ENCODE measurements at regions of chr7 and their contacts with region 1.

Region 1: DNA sequence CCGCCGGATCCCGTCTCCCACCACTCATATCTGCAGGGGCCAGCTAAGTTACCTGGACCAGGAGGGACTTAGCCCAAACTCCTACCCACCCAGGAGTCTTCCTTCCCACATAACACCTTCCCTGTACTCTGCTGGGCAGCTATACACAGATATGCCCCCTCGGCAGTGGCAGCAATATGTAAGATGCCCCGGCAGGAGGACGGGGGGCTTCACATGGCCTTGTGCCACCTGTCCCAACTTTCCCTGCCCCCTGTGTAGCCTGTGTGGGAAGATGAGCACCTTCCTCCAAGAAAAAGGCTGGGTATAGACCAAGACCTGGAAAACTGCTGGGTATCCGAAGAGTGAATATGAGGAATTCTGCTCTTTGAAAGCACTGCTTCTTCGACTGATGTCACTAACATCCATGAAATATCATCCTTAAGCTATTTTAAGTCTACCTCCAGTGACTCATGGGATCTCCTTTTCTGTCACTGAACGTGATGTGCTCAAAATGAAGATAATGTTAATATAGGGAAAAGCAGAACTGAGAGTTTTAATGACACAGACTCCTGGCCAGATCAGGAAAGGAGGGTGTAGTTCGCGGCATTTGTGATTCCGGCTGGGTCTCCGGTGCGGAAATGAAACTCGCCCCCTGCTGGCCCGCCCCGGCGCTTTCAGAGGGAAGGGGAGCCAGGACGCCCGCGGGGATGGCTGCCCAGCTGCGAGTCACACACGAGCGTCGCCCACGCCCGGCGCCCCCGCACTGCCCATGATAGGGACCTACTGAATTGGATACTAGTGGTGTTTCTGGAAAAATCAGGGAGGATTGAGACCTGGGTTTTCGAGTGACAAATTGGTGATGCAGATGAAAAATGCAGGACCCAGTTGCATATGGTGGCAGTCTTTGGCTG is 256.9 kb upstream of the NFE2L3 start:
- DNase-seq: peak; percentile 76 to 93
- ATAC-seq: peak; percentile 73
- H3K4me3 ChIP-seq: no peak overlapping the region
- H3K27ac ChIP-seq: no peak overlapping the region
- H3K4me1 ChIP-seq: no peaks in the 10 kb centered on the region
- H3K27me3 ChIP-seq: peaks cover 0 to 3% of the 10 kb centered on the region in 2 donors

Region 2: GRCh38 chr7:25926009-25926408 is 30.9 kb after region 1 on chr7:
- intact Hi-C with region 1: no loop called
- DNase-seq: peak in 1 of 2 donors; percentile 41
- ATAC-seq: peak; percentile 64
- H3K4me3 ChIP-seq: no peak overlapping the region
- H3K27ac ChIP-seq: no peak overlapping the region
- H3K4me1 ChIP-seq: no peaks in the 10 kb centered on the region
- H3K27me3 ChIP-seq: peaks cover 0 to 4% of the 10 kb centered on the region in 2 donors

Region 3: GRCh38 chr7:26061688-26062150 is 166.6 kb after region 1 on chr7:
- intact Hi-C with region 1: loop called (anchors 2 kb)
- DNase-seq: peak; percentile 53 to 83
- ATAC-seq: peak; percentile 76
- H3K4me3 ChIP-seq: no peak overlapping the region
- H3K27ac ChIP-seq: no peak overlapping the region
- H3K4me1 ChIP-seq: no peaks in the 10 kb centered on the region
- H3K27me3 ChIP-seq: peaks cover 0 to 4% of the 10 kb centered on the region in 2 donors

Region 4: GRCh38 chr7:26667500-26668133 is 772.5 kb after region 1 on chr7:
- intact Hi-C with region 1: loop called (anchors 5 to 10 kb)
- DNase-seq: peak in 1 of 2 donors; percentile 48
- ATAC-seq: peak; percentile 67
- H3K4me3 ChIP-seq: no peak overlapping the region
- H3K27ac ChIP-seq: no peak overlapping the region
- H3K4me1 ChIP-seq: no peaks in the 10 kb centered on the region
- H3K27me3 ChIP-seq: no peaks in the 10 kb centered on the region

Region 5: GRCh38 chr7:26675143-26675887 is 780.2 kb after region 1 on chr7:
- intact Hi-C with region 1: loop called (anchors 5 to 10 kb)
- DNase-seq: no peak
- ATAC-seq: no peak
- H3K4me3 ChIP-seq: no peak overlapping the region
- H3K27ac ChIP-seq: no peak overlapping the region
- H3K4me1 ChIP-seq: no peaks in the 10 kb centered on the region
- H3K27me3 ChIP-seq: no peaks in the 10 kb centered on the region